B cell (primary cell): ENCODE measurements at regions of chr15 and their contacts with region 1.

Region 1: GRCh38 chr15:40564591-40565332 is at the start of gene CCDC32:
- DNase-seq: peak; percentile 96
- ATAC-seq: peak; percentile 90
- H3K4me3 ChIP-seq: peak within 1 kb of the TSS; percentile 81 to 100 (median 89)
- H3K4me3 Mint-ChIP-seq: peak within 1 kb of the TSS; percentile 82
- H3K27ac ChIP-seq: peak within 1 kb of the TSS; percentile 87 to 97
- H3K27ac Mint-ChIP-seq: peak within 1 kb of the TSS; percentile 86
- H3K4me1 ChIP-seq: peaks cover 50 to 55% of the 10 kb centered on the region in 2 donors
- H3K4me1 Mint-ChIP-seq: peaks cover 62% of the 10 kb centered on the region
- H3K27me3 ChIP-seq: no peaks in the 10 kb centered on the region
- H3K27me3 Mint-ChIP-seq: no peaks in the 10 kb centered on the region
- CTCF ChIP-seq: no peak
- total RNA-seq, gene CCDC32: 76.6 and 78.4 TPM in 2 replicates

Region 2: GRCh38 chr15:38631126-38632075 is 1933.4 kb before region 1 on chr15:
- CTCF ChIA-PET with region 1: no interaction called
- POLR2A ChIA-PET with region 1: no interaction called
- intact Hi-C with region 1: no loop called
- DNase-seq: no peak
- ATAC-seq: no peak
- H3K4me3 ChIP-seq: no peak overlapping the region
- H3K4me3 Mint-ChIP-seq: no peak overlapping the region
- H3K27ac ChIP-seq: no peak overlapping the region
- H3K27ac Mint-ChIP-seq: no peak overlapping the region
- H3K4me1 ChIP-seq: peaks cover 3 to 13% of the 10 kb centered on the region in 2 donors
- H3K4me1 Mint-ChIP-seq: peaks cover 14% of the 10 kb centered on the region
- H3K27me3 ChIP-seq: no peaks in the 10 kb centered on the region
- H3K27me3 Mint-ChIP-seq: no peaks in the 10 kb centered on the region
- CTCF ChIP-seq: no peak

Region 3: GRCh38 chr15:40525855-40526254 is 38.9 kb before region 1 on chr15:
- CTCF ChIA-PET with region 1: interaction called, 24 read pairs
- POLR2A ChIA-PET with region 1: interaction called, 3 read pairs
- intact Hi-C with region 1: no loop called
- DNase-seq: no peak
- ATAC-seq: no peak
- H3K4me3 ChIP-seq: no peak overlapping the region
- H3K4me3 Mint-ChIP-seq: no peak overlapping the region
- H3K27ac ChIP-seq: no peak overlapping the region
- H3K27ac Mint-ChIP-seq: no peak overlapping the region
- H3K4me1 ChIP-seq: no peaks in the 10 kb centered on the region
- H3K4me1 Mint-ChIP-seq: peaks cover 2% of the 10 kb centered on the region
- H3K27me3 ChIP-seq: no peaks in the 10 kb centered on the region
- H3K27me3 Mint-ChIP-seq: no peaks in the 10 kb centered on the region
- CTCF ChIP-seq: no peak

Region 4: GRCh38 chr15:40603928-40604327 is 39.2 kb after region 1 on chr15:
- CTCF ChIA-PET with region 1: no interaction called
- POLR2A ChIA-PET with region 1: no interaction called
- intact Hi-C with region 1: no loop called
- DNase-seq: no peak
- ATAC-seq: no peak
- H3K4me3 ChIP-seq: no peak overlapping the region
- H3K4me3 Mint-ChIP-seq: no peak overlapping the region
- H3K27ac ChIP-seq: no peak overlapping the region
- H3K27ac Mint-ChIP-seq: no peak overlapping the region
- H3K4me1 ChIP-seq: no peaks in the 10 kb centered on the region
- H3K4me1 Mint-ChIP-seq: no peaks in the 10 kb centered on the region
- H3K27me3 ChIP-seq: no peaks in the 10 kb centered on the region
- H3K27me3 Mint-ChIP-seq: no peaks in the 10 kb centered on the region
- CTCF ChIP-seq: no peak

Region 5: GRCh38 chr15:40694688-40695468 is 130.1 kb after region 1 on chr15 and contains the start of gene RAD51:
- CTCF ChIA-PET with region 1: interaction called, 3 read pairs
- POLR2A ChIA-PET with region 1: interaction called, 4 read pairs
- intact Hi-C with region 1: loop called (anchors 2 kb)
- DNase-seq: peak; percentile 96
- ATAC-seq: peak; percentile 88
- H3K4me3 ChIP-seq: peak within 1 kb of the TSS; percentile 84 to 100 (median 87)
- H3K4me3 Mint-ChIP-seq: peak within 1 kb of the TSS; percentile 100
- H3K27ac ChIP-seq: peak within 1 kb of the TSS; percentile 93 to 94
- H3K27ac Mint-ChIP-seq: peak within 1 kb of the TSS; percentile 99
- H3K4me1 ChIP-seq: peaks cover 7 to 18% of the 10 kb centered on the region in 2 donors
- H3K4me1 Mint-ChIP-seq: peaks cover 25% of the 10 kb centered on the region
- H3K27me3 ChIP-seq: no peaks in the 10 kb centered on the region
- H3K27me3 Mint-ChIP-seq: no peaks in the 10 kb centered on the region
- CTCF ChIP-seq: no peak
- total RNA-seq, gene RAD51: 1.9 and 2.0 TPM in 2 replicates

Region 6: DNA sequence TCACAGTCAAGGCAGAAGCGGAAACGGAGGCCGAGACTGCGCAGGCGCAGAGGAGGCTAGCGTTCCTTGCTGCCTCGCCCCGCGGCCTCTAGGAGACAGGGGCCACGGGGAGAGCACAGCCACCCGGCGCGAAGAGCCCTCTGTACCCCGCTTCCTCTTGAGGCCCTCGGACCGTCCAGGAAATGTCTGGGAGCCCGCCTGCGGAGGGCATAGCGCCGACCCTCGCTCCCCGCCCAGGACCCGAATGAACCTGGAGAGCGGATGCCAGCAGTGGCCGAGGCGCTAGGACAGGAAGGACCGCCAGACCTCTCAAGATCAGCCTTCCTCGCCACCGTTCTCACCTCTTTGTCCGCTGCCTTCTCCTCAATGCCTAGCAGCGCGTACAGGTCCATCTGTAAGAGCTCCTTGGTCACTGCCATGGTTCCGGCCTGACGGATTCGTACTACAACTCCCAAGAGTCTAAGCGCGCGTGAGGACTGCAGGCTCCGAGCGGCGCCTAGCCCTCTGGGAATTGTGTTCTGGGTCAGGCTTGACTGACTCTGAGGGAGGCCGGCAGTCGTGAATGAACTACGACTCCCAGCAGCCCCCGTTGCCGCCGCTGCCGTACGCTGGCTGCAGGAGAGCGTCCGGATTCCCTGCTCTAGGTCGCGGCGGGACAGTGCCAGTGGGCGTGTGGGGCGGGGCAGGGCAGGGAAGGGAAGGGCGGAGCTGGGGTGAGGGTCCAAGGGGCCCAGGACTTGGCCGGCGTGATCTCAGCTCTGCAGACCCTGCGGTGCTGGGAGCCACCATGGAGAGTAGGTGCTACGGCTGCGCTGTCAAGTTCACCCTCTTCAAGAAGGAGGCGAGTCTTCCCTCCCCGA is 242.5 kb after region 1 on chr15 and contains the starts of genes DNAJC17 and ZFYVE19:
- CTCF ChIA-PET with region 1: no interaction called
- POLR2A ChIA-PET with region 1: no interaction called
- intact Hi-C with region 1: loop called (anchors 1 kb)
- DNase-seq: peak; percentile 97
- ATAC-seq: peak; percentile 96
- H3K4me3 ChIP-seq: peak within 1 kb of the TSS; percentile 78 to 100 (median 100)
- H3K4me3 Mint-ChIP-seq: peak within 1 kb of the TSS; percentile 99
- H3K27ac ChIP-seq: peak within 1 kb of the TSS; percentile 86 to 95
- H3K27ac Mint-ChIP-seq: peak within 1 kb of the TSS; percentile 98
- H3K4me1 ChIP-seq: peaks cover 12 to 18% of the 10 kb centered on the region in 2 donors
- H3K4me1 Mint-ChIP-seq: peaks cover 24% of the 10 kb centered on the region
- H3K27me3 ChIP-seq: no peaks in the 10 kb centered on the region
- H3K27me3 Mint-ChIP-seq: no peaks in the 10 kb centered on the region
- CTCF ChIP-seq: peak; percentile 11
- total RNA-seq, gene DNAJC17: 46.1 and 52.3 TPM in 2 replicates
- total RNA-seq, gene ZFYVE19: 29.4 and 29.8 TPM in 2 replicates

Region 7: GRCh38 chr15:41079717-41080116 is 515.0 kb after region 1 on chr15:
- CTCF ChIA-PET with region 1: no interaction called
- POLR2A ChIA-PET with region 1: no interaction called
- intact Hi-C with region 1: no loop called
- DNase-seq: peak; percentile 60
- ATAC-seq: peak; percentile 83
- H3K4me3 ChIP-seq: no peak overlapping the region
- H3K4me3 Mint-ChIP-seq: peak overlapping the region; percentile 73
- H3K27ac ChIP-seq: peak overlapping the region; percentile 79 to 84
- H3K27ac Mint-ChIP-seq: peak overlapping the region; percentile 93
- H3K4me1 ChIP-seq: peaks cover 20 to 24% of the 10 kb centered on the region in 2 donors
- H3K4me1 Mint-ChIP-seq: peaks cover 21% of the 10 kb centered on the region
- H3K27me3 ChIP-seq: no peaks in the 10 kb centered on the region
- H3K27me3 Mint-ChIP-seq: no peaks in the 10 kb centered on the region
- CTCF ChIP-seq: no peak